Common myeloid progenitor, CD34-positive (primary cell): ENCODE measurements at regions of chr15 and their contacts with region 1.

Region 1: DNA sequence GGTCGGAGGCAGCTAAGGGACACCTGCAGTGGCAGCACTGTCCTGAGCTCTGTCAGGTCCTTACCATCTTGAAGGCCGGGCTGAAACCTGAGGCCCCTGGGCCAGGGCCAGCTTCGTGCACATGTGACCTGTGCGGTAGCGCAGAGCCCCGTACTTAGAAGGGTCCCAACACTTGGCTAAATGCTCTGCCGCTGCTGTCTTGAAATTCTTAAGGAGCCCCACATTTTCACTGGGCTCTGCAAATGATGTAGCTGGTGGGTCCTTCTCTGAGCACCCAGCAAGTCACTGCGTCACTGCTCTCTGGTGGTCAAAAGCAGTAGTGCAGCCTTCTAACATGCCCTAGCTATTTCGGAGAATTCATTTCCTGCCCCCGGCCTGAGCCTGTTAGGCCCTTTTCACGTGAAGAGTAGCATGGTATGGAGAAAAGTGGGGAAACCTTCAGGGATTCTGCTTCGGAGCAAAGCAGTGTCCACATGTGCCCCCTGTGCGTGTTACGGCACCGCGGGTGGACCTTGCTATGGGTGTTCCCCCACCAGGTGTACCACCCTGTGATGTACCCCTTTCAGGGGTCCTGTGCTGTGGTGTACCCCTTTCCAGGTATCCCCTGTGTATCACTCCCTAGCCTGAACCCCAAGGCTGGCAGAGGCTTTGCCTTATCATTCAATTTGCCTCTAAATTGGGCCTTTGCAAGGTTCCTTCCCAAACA is 79.7 kb downstream of the TMEM266 start:
- DNase-seq: peak; percentile 80 to 90 (median 84)
- H3K4me3 ChIP-seq: peak overlapping the region in 2 of 7 experiments; percentile 22 to 51
- H3K27ac ChIP-seq: no peak overlapping the region
- H3K4me1 ChIP-seq: peaks cover 2 to 13% (median 7%) of the 10 kb centered on the region in 4 experiments
- H3K27me3 ChIP-seq: peaks cover 0 to 9% (median 0%) of the 10 kb centered on the region in 5 experiments

Region 2: DNA sequence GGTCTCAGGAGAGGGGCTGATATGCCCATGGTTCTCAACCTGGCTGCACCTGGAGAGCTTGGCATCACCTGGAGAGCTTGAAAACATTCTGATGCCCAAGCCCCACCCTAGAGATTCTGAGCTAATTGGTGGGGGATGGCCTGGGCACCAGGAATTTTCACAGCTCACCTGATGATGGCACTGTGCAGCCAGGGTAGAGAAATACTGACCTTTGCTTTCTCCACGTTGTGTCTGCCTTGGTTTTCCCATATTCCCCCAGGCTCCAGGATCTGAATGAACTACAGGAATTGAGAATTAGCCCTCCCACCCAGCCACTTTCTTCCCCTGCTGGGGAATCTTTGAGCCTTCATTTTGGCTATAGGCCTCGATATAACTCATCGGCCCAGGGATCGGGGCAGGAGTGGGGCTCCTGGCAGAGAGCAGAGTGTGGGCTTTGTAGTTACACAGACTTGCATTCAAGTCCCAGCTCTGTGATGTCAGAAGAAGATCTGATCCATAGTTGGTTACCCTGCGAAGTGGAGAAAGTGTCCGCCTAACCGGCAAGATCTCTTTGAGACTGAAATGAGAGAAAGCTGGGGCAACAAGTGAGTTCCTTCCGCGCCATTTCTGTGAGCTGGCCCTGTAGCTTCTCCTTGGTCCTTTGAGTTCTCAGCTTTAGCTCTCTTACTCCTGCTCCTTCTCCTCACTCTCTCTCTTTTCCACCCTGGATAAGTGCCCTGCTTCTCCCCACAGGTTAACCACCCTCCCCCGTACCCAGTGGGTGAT is 329.4 kb before region 1 on chr15:
- CTCF ChIA-PET with region 1: interaction called, 10 read pairs
- POLR2A ChIA-PET with region 1: no interaction called
- DNase-seq: peak; percentile 6 to 19 (median 17)
- H3K4me3 ChIP-seq: no peak overlapping the region
- H3K27ac ChIP-seq: no peak overlapping the region
- H3K4me1 ChIP-seq: no peaks in the 10 kb centered on the region
- H3K27me3 ChIP-seq: peaks cover 0 to 4% (median 0%) of the 10 kb centered on the region in 5 experiments

Region 3: DNA sequence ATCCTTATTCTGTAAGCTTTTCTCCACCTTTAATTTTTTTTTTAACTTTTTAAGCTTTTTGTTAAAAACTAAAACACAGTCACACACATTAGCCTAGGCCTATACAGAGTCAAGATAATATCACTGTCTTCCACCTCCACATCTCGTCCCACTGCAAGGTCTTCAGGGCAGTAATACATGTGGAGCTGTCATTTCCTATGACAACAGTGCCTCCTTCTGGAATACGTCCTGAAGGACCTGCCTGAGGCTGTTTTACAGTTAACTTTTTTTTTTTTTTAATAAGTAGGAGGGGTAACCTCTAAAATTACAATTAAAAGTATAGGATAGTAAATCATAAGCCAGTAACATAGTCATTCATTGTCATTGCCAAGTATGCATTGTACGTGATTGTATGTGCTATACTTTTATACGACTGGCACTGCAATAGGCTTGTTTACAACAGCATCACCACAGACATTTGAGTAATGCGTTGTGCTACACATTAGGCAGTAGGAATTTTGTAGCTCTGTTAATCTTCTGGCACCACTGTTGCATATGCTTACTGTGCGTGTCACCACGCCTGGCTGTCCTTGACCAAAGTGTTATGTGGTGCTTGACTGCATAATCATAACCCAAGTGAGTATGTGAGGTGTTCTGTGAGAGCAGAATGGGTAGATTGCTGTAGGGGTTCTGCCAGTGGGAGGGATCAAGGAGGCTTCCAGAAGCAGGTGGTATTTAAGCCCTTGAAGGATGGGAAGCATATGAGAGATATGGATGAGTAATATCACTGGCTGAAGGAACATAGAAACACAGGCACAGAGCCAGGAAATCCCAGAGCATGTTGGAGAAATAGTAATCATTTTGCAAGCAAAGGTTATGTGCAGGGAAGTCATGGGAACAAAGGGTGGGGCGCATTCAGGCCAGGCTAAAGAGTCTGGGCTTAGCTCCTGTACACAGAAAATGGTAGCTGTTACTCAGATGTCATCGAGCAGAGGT is 217.5 kb before region 1 on chr15:
- CTCF ChIA-PET with region 1: interaction called, 44 read pairs
- POLR2A ChIA-PET with region 1: no interaction called
- DNase-seq: peak; percentile 76 to 84 (median 83)
- H3K4me3 ChIP-seq: no peak overlapping the region
- H3K27ac ChIP-seq: no peak overlapping the region
- H3K4me1 ChIP-seq: no peaks in the 10 kb centered on the region
- H3K27me3 ChIP-seq: no peaks in the 10 kb centered on the region

Region 4: DNA sequence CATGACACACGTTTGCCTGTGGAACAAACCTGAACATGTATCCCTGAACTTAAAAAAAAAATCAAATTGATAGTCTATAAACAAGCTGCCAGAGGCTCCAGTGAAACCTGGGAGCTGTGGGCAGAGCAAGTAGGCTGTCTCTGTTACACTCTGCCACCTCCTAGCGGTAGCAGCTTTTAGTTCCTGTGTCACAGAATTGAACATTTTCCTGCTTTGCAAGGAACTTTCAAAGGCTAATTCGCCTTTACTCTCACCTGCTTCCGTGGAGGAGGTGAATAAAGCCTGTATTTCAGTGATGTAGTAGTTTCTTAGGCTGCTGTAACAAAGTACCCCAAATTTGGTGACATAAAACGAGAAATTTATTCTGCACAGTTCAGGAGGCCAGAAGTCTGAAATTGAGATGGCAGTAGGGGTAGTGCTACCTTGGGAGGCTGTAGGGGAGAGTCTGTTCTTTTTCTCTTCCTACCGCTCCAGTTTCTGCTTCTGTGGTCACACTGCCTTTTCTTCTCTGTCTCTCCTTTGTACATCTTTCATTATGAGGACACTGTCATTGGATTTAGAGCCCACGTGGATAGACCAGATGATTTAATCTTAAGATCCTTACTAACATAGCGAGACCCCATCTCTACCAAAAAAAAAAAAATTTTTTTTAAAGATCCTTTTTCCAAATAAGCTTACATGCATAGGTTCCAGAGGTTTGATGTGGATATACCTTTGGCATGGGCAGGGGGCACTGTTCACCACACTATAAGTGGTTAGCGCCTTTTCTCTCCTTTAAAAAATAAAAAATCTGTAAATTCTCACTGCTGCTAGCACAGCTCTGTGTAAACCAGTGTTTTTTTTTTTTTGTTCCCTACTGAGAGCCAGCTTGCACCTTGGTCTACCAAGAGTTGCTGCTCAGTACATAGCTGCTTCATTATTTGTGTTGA is 210.6 kb before region 1 on chr15:
- CTCF ChIA-PET with region 1: interaction called, 44 read pairs
- POLR2A ChIA-PET with region 1: interaction called, 4 read pairs
- DNase-seq: peak; percentile 39 to 72 (median 65)
- H3K4me3 ChIP-seq: no peak overlapping the region
- H3K27ac ChIP-seq: no peak overlapping the region
- H3K4me1 ChIP-seq: peaks cover 0 to 8% (median 2%) of the 10 kb centered on the region in 4 experiments
- H3K27me3 ChIP-seq: no peaks in the 10 kb centered on the region

Region 5: DNA sequence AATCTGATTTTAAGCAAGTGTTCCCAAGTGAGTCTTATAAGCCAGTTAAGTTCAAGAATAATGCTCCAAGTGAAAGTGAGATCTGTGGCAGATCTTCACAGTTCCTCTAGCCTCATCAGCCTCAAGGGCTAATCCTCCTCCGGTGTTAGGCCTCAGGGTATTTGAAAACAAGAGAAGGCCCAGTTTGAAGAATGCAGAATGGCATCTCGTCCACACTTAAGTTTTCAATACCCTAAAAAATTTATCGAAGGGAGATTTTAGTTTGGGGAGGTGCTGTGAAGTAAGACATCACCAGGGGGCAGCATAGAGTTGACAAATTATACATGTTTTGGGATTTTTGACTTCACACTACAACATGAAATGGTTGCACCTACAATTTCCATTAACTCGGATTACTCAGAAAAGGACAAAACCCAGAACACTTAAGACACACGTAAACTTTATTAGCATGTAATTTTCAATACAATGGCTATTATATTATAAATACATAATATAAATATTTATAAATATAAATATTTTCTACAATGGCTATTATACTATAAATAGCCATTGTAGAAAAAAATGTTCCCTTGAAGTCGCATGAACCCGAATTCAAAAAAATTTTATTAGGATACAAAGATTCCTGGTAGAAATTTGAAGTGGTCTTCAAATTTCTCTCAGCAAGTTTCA is 82.1 kb before region 1 on chr15:
- CTCF ChIA-PET with region 1: interaction called, 48 read pairs
- POLR2A ChIA-PET with region 1: no interaction called
- DNase-seq: peak; percentile 69 to 76 (median 73)
- H3K4me3 ChIP-seq: peak overlapping the region in 4 of 7 experiments; percentile 38 to 74 (median 63)
- H3K27ac ChIP-seq: no peak overlapping the region
- H3K4me1 ChIP-seq: peaks cover 9 to 31% (median 25%) of the 10 kb centered on the region in 4 experiments
- H3K27me3 ChIP-seq: peaks cover 8 to 40% (median 25%) of the 10 kb centered on the region in 5 experiments

Region 6: DNA sequence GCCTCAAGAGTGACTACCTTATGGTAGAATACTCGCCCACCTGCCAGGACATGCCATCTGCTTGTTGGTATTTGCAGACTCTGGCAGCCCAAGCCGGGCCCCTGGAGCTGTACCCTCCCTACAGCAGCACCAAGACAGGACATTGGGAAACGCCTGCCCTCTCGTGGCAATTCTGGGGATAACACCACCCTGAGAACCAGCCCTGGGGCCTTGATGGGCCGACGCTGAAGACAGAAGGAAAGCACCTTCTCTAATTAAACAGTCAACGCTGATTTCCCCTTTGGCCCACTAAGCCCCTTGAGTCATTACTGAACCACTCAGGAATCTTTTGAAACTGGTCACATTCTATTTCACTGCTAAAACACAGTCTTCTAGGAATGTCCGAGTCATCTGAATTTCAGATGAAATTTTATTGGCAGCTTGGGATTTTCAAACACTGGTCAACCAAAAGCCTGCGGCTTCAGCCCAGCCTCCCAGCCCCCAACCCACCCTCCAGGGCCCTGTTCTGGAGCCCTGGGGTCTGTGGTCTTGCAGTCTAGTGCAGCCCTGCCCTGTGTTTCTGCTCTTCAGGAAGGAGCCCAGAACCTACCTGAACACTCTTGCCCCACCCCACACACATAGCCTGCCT is 11.6 kb after region 1 on chr15:
- CTCF ChIA-PET with region 1: interaction called, 35 read pairs
- POLR2A ChIA-PET with region 1: no interaction called
- DNase-seq: peak; percentile 75 to 90 (median 87)
- H3K4me3 ChIP-seq: peak overlapping the region in 6 of 7 experiments; percentile 13 to 71 (median 29)
- H3K27ac ChIP-seq: no peak overlapping the region
- H3K4me1 ChIP-seq: peaks cover 0 to 14% (median 12%) of the 10 kb centered on the region in 4 experiments
- H3K27me3 ChIP-seq: peaks cover 0 to 4% (median 0%) of the 10 kb centered on the region in 5 experiments